HEK293 (cell line): ENCODE measurements at regions of chr6 and their contacts with region 1.

Region 1: GRCh38 chr6:158853072-158853871 is 34.1 kb upstream of the EZR start:
- H3K4me3 ChIP-seq: no peak overlapping the region; the same call in 1 of the 2 replicates
- H3K27ac ChIP-seq: no peak overlapping the region; the same call in 1 of the 2 replicates
- H3K4me1 ChIP-seq: peaks cover 12% of the 10 kb centered on the region
- CTCF ChIP-seq: no peak

Region 2: GRCh38 chr6:158605266-158605878 is 247.9 kb before region 1 on chr6:
- CTCF ChIA-PET with region 1: no interaction called
- POLR2A ChIA-PET with region 1: no interaction called
- H3K4me3 ChIP-seq: no peak overlapping the region
- H3K27ac ChIP-seq: no peak overlapping the region
- H3K4me1 ChIP-seq: no peaks in the 10 kb centered on the region
- CTCF ChIP-seq: no peak; the same call in 1 of the 2 replicates

Region 3: GRCh38 chr6:158631678-158632537 is 221.4 kb before region 1 on chr6:
- CTCF ChIA-PET with region 1: no interaction called
- POLR2A ChIA-PET with region 1: no interaction called
- H3K4me3 ChIP-seq: no peak overlapping the region
- H3K27ac ChIP-seq: no peak overlapping the region
- H3K4me1 ChIP-seq: no peaks in the 10 kb centered on the region
- CTCF ChIP-seq: no peak

Region 4: DNA sequence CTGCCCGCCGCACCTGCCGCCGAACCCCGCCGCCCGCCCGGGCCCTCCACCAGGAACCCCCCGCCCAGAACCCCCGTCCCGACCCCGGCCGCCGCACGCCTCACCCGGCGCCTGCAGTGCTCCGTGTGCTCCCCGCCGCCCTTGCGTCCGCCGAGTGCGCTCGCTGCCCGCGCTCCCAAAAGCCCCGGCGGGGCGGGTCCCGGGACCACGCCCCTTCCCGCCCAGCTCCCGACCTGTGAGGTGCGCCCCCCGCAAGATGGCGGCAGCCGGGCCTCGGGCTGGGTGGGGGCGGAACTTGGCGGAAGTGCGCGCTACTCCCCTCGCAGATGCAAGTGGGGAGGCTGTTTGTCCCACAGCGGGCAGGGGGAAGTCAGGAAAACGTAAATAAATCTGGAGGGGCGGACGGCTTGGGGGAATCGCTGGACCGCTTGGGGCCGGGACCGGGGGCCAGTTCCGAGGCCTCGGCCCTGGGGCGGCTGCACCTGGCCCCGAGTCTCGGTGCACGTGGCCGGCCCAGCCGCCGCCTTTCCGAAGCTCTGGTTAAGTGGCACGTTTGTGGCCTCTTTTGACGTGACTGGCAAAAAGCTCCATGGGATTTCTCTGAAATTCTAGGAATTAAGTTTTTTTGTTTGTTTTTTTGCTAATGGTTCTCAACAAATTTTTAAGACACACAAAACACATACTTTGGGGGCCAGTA is 33.9 kb before region 1 on chr6 and contains the start of gene EZR:
- CTCF ChIA-PET with region 1: interaction called, 3 read pairs
- POLR2A ChIA-PET with region 1: interaction called, 15 read pairs
- H3K4me3 ChIP-seq: peak within 1 kb of the TSS; percentile 80
- H3K27ac ChIP-seq: peak within 1 kb of the TSS; percentile 84
- H3K4me1 ChIP-seq: peaks cover 10% of the 10 kb centered on the region
- CTCF ChIP-seq: peak; percentile 41; the same call in 1 of the 2 replicates

Region 5: DNA sequence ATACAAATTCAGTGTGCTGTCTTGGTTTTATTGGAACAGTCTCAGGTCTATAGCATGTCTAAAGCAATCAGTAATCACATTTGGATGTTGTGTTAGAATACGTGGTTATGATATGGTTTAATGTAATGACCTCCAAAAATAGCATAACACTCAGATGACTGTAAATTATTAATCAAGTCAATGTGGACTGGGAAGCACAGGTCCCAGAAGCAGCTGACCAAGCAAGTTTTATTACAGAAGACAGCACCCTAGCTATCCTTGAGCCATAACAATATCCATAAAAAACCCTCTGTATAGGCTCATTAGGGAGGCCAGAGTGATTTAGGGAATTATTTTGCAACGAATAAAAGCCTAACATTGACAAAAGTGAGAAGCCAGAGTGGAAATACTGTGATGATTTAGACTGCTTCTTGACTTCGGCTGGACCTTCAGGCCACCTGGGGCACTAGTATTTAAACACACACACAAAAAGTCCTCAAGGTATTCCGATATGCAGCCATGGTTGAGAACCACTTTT is 79.9 kb after region 1 on chr6:
- CTCF ChIA-PET with region 1: no interaction called
- POLR2A ChIA-PET with region 1: no interaction called
- H3K4me3 ChIP-seq: no peak overlapping the region
- H3K27ac ChIP-seq: no peak overlapping the region
- H3K4me1 ChIP-seq: no peaks in the 10 kb centered on the region
- CTCF ChIP-seq: no peak